ENCODE measurements at regions of chr5 and their contacts with region 1.

Region 1: DNA sequence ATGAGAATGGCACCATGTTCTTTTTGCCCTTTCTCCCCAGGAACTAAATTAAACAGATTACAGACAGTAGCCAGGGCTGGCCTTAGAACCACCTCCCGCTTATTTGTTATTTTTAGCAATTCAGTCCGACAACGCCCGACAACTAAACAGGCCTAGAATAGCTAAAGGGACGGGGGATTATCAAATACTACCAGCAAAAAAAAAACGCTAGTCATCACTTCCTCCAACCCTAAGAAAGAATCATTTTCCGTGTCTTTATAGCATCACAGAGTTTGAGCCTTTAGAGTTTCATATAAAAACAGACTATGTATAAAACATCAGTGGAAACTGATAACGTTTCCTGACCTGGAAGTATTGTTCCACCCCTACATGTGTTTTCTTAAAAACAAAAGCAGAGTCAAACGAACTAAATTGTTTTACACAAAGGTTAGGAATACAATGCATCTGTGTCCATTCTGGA is 35.3 kb downstream of the PFDN1 start:
- DNase-seq: no peak
- ATAC-seq: peak; percentile 14
- H3K4me3 Mint-ChIP-seq: no peak overlapping the region
- H3K27ac Mint-ChIP-seq: peak overlapping the region; percentile 59
- H3K4me1 Mint-ChIP-seq: peaks cover 35% of the 10 kb centered on the region
- H3K27me3 Mint-ChIP-seq: no peaks in the 10 kb centered on the region

Region 2: GRCh38 chr5:139670369-139671095 is 597.1 kb before region 1 on chr5:
- CTCF ChIA-PET with region 1: no interaction called
- POLR2A ChIA-PET with region 1: no interaction called
- intact Hi-C with region 1: no loop called
- DNase-seq: peak; percentile 59
- ATAC-seq: peak; percentile 61
- H3K4me3 Mint-ChIP-seq: no peak overlapping the region
- H3K27ac Mint-ChIP-seq: peak overlapping the region; percentile 43
- H3K4me1 Mint-ChIP-seq: peaks cover 27% of the 10 kb centered on the region
- H3K27me3 Mint-ChIP-seq: peaks cover 8% of the 10 kb centered on the region

Region 3: DNA sequence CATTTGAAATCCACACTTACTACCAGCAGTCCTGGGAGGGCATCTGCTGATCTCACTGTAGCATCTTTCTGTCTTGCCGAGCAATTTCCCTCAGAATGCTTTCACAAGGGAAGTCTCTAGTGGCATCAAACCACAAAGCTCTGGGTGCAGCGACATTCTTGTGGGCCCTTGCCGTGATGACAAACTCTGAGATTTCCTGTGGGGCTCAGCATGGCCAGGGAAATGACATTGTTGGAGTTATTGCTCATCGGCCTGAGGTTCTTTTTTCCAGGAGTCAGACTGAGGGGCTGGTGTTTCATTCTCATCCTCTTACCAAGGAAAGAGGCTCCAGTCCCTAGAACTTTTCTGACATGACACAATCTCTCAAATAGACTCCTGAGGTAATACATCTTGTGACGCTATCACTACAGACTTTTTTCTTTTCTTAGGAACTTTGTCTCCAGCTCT is 16.0 kb before region 1 on chr5:
- CTCF ChIA-PET with region 1: interaction called, 6 read pairs
- POLR2A ChIA-PET with region 1: no interaction called
- intact Hi-C with region 1: loop called in 1 of 2 experiments (anchors 1 kb)
- DNase-seq: peak; percentile 85
- ATAC-seq: peak; percentile 94
- H3K4me3 Mint-ChIP-seq: peak overlapping the region; percentile 18
- H3K27ac Mint-ChIP-seq: peak overlapping the region; percentile 90
- H3K4me1 Mint-ChIP-seq: peaks cover 42% of the 10 kb centered on the region
- H3K27me3 Mint-ChIP-seq: no peaks in the 10 kb centered on the region

Measured in activated CD4-positive, alpha-beta T cell treated with anti-CD3 and anti-CD28 coated beads for 36 hours (primary cell).